CD4-positive, alpha-beta T cell (primary cell): ENCODE measurements at regions of chr15 and their contacts with region 1.

Region 1: GRCh38 chr15:74615508-74616365 is at the start of gene CLK3:
- DNase-seq: peak; percentile 92 to 99 (median 97)
- ATAC-seq: peak; percentile 70
- H3K4me3 ChIP-seq: peak within 1 kb of the TSS; percentile 100
- H3K4me3 Mint-ChIP-seq: peak within 1 kb of the TSS; percentile 94
- H3K27ac ChIP-seq: peak within 1 kb of the TSS; percentile 95 to 98
- H3K27ac Mint-ChIP-seq: peak within 1 kb of the TSS; percentile 99
- H3K4me1 ChIP-seq: peaks cover 63% of the 10 kb centered on the region
- H3K4me1 Mint-ChIP-seq: peaks cover 42% of the 10 kb centered on the region
- H3K27me3 ChIP-seq: no peaks in the 10 kb centered on the region
- H3K27me3 Mint-ChIP-seq: no peaks in the 10 kb centered on the region
- CTCF ChIP-seq: no peak
- total RNA-seq, gene CLK3: 275 to 293 TPM

Region 2: DNA sequence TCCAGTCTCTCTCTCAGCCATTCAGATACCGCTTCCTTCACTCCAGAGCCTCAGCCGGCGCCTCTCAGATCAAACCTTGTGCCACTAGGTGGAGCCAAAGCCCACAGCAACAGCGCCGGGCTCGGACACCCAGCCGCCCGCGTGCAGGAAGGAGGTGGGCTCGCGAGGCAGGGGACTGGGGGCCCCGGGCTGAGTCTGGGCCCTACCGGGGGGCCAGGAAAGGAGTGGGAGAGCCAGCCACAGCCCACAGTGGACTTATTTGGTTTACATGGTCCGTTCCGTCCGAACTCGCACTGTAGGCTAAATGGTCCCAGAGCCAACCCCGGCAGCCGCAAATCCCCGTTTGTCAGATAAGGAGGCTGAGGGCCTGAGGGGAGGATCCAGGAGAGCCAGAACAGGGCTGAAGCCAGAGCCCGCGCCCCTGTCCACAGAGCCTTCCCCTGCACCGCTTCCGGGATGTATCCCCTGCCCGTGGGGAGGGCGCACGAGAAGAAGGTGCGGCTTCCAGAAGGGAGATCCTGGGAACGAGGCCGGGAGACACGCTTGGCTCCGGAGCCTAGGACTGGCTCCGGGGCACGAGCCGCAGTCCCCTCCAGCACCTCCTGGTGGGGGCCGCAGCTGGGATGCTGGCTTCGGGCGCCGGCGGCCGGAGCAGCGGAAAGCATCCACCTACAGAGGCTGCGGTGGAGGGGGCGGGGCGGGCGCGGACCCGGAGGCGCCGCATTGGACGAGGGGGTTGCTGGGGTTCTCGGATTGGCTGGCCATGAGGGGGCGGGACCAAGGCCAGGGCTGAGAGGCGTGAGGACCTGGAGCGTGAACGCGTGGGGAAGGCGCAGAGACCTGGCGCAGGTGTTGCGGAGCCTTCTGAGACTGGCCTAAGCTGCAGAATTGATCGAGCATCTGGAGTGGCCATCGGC is 241.7 kb before region 1 on chr15:
- CTCF ChIA-PET with region 1: no interaction called
- POLR2A ChIA-PET with region 1: no interaction called
- intact Hi-C with region 1: loop called in 1 of 2 experiments (anchors 5 kb)
- DNase-seq: peak; percentile 91 to 97 (median 95)
- ATAC-seq: peak; percentile 95
- H3K4me3 ChIP-seq: peak overlapping the region; percentile 94
- H3K4me3 Mint-ChIP-seq: peak overlapping the region; percentile 86
- H3K27ac ChIP-seq: peak overlapping the region; percentile 51 to 54
- H3K27ac Mint-ChIP-seq: peak overlapping the region; percentile 8
- H3K4me1 ChIP-seq: peaks cover 26% of the 10 kb centered on the region
- H3K4me1 Mint-ChIP-seq: peaks cover 12% of the 10 kb centered on the region
- H3K27me3 ChIP-seq: peaks cover 0 to 2% of the 10 kb centered on the region in 2 experiments
- H3K27me3 Mint-ChIP-seq: peaks cover 13% of the 10 kb centered on the region
- CTCF ChIP-seq: peak; percentile 99

Region 3: GRCh38 chr15:74470631-74471395 is 144.9 kb before region 1 on chr15:
- CTCF ChIA-PET with region 1: no interaction called
- POLR2A ChIA-PET with region 1: no interaction called
- intact Hi-C with region 1: no loop called
- DNase-seq: no peak
- ATAC-seq: no peak
- H3K4me3 ChIP-seq: no peak overlapping the region
- H3K4me3 Mint-ChIP-seq: no peak overlapping the region
- H3K27ac ChIP-seq: no peak overlapping the region
- H3K27ac Mint-ChIP-seq: no peak overlapping the region
- H3K4me1 ChIP-seq: no peaks in the 10 kb centered on the region
- H3K4me1 Mint-ChIP-seq: no peaks in the 10 kb centered on the region
- H3K27me3 ChIP-seq: no peaks in the 10 kb centered on the region
- H3K27me3 Mint-ChIP-seq: no peaks in the 10 kb centered on the region
- CTCF ChIP-seq: no peak

Region 4: GRCh38 chr15:74545880-74546656 is 69.7 kb before region 1 on chr15:
- CTCF ChIA-PET with region 1: no interaction called
- POLR2A ChIA-PET with region 1: interaction called, 61 read pairs
- intact Hi-C with region 1: loop called (anchors 1 to 5 kb)
- DNase-seq: peak; percentile 59 to 95 (median 82)
- ATAC-seq: peak; percentile 54
- H3K4me3 ChIP-seq: peak overlapping the region; percentile 23
- H3K4me3 Mint-ChIP-seq: peak overlapping the region; percentile 61
- H3K27ac ChIP-seq: peak overlapping the region; percentile 27 to 45
- H3K27ac Mint-ChIP-seq: peak overlapping the region; percentile 81
- H3K4me1 ChIP-seq: peaks cover 63% of the 10 kb centered on the region
- H3K4me1 Mint-ChIP-seq: peaks cover 79% of the 10 kb centered on the region
- H3K27me3 ChIP-seq: no peaks in the 10 kb centered on the region
- H3K27me3 Mint-ChIP-seq: no peaks in the 10 kb centered on the region
- CTCF ChIP-seq: no peak

Region 5: DNA sequence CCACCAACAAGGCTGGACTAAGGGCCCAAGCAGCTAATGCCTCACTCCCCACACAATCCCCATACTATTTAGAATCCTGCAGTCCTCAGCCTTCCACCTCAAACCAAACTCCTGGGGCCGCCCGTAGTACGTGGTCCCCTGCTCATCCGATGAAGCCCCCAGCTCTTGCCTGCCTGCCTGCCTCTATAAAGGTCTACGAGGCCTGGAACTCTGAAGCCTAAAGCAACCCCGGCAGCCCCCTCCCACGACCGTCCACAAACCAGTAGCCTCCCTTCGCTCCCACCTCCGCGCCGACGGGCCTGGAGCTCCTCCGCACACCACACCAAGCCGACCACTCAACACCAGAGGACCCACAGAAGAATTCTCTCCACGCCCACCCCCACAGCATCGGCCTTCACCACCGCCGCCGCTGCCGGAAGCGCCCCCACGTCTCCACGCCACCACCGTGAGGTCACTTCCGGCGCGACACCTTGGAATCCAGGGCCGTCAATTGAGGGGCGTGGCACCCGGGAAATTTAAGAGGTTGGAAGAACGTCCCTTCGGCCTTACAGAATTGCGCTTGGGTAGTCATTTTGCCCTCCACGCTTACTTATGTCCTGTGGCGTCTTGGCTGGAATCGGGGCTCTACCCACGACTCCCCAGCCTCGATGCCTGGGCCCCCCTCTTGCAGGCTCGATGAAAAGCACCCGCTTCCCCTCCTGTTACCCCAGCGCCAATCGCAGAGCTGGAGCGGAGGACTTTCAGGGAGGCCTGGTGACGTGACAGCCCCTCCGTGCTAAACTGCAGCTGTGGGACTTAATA is 80.1 kb after region 1 on chr15 and contains the start of gene EDC3:
- CTCF ChIA-PET with region 1: no interaction called
- POLR2A ChIA-PET with region 1: interaction called, 8 read pairs
- intact Hi-C with region 1: loop called in 1 of 2 experiments (anchors 5 kb)
- DNase-seq: peak; percentile 70 to 93 (median 80)
- ATAC-seq: peak; percentile 86
- H3K4me3 ChIP-seq: peak within 1 kb of the TSS; percentile 78
- H3K4me3 Mint-ChIP-seq: peak within 1 kb of the TSS; percentile 100
- H3K27ac ChIP-seq: peak within 1 kb of the TSS; percentile 60 to 83
- H3K27ac Mint-ChIP-seq: peak within 1 kb of the TSS; percentile 98
- H3K4me1 ChIP-seq: peaks cover 16% of the 10 kb centered on the region
- H3K4me1 Mint-ChIP-seq: peaks cover 44% of the 10 kb centered on the region
- H3K27me3 ChIP-seq: no peaks in the 10 kb centered on the region
- H3K27me3 Mint-ChIP-seq: peaks cover under 1% of the 10 kb centered on the region
- CTCF ChIP-seq: no peak
- total RNA-seq, gene EDC3: 11.0 to 11.1 TPM

Region 6: DNA sequence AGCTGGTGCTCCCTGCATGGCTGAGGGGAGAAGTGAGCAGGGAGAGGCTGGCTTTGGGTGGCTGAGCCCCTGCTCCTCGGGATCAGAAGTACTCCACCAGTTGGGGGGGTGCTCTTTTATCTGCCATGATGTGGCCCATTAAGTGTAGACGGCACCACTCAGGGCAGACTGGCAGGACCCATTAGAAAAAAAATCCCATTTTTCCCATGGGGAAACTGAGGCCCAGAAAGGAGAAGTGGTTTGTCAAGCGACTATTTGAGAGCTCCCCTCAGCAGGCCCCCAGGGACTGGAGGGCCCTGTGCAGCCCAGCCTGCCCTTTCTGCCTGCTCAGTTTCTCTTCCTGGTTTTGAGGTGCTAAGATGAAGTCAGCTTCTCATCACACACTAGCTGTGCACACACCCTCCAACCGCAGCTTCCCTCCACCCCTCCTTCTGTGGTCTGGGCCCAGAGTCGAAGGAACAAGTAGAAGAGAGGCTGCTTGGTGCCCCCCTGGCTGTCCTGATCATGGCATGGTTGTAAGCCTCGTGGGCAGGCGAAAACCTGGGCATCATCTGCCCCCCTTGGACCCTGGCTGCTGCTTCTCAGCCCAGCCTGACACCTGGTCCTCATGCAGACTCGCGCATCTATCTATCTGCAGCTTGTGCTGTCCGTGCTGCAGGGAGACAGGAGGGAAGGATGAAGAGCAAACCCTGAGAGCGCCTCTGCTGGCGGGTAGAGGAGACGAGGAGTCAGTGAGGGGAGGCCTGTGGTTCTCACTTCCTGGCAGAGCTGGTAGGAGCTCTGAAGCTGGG is 171.7 kb after region 1 on chr15:
- CTCF ChIA-PET with region 1: interaction called, 3 read pairs
- POLR2A ChIA-PET with region 1: interaction called, 27 read pairs
- intact Hi-C with region 1: no loop called
- DNase-seq: peak; percentile 78 to 98 (median 84)
- ATAC-seq: peak; percentile 72
- H3K4me3 ChIP-seq: peak overlapping the region; percentile 100
- H3K4me3 Mint-ChIP-seq: peak overlapping the region; percentile 90
- H3K27ac ChIP-seq: peak overlapping the region; percentile 69 to 93
- H3K27ac Mint-ChIP-seq: peak overlapping the region; percentile 94
- H3K4me1 ChIP-seq: peaks cover 91% of the 10 kb centered on the region
- H3K4me1 Mint-ChIP-seq: peaks cover 71% of the 10 kb centered on the region
- H3K27me3 ChIP-seq: no peaks in the 10 kb centered on the region
- H3K27me3 Mint-ChIP-seq: no peaks in the 10 kb centered on the region
- CTCF ChIP-seq: peak; percentile 83

Region 7: DNA sequence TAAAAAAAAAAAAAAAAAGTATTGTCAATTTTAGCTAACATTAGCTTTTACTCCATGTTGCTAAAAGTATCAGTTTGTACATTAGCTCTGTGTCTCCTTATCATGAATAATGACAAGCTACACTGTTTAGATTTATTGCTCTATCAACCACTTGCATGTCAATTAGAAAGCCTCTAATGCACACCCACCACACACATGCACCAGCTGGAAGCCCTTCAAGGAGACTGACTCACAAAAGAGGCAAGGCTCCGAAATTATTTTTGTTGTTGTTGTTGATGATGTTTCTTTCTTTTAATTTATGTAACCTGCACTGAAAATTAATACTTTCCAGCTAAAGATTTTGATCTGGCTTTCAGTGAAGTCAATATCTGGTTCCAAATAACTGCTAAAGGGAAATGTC is 1624.0 kb after region 1 on chr15:
- CTCF ChIA-PET with region 1: no interaction called
- POLR2A ChIA-PET with region 1: no interaction called
- intact Hi-C with region 1: no loop called
- DNase-seq: no peak
- ATAC-seq: no peak
- H3K4me3 ChIP-seq: no peak overlapping the region
- H3K4me3 Mint-ChIP-seq: no peak overlapping the region
- H3K27ac ChIP-seq: no peak overlapping the region
- H3K27ac Mint-ChIP-seq: no peak overlapping the region
- H3K4me1 ChIP-seq: no peaks in the 10 kb centered on the region
- H3K4me1 Mint-ChIP-seq: no peaks in the 10 kb centered on the region
- H3K27me3 ChIP-seq: no peaks in the 10 kb centered on the region
- H3K27me3 Mint-ChIP-seq: no peaks in the 10 kb centered on the region
- CTCF ChIP-seq: no peak